ENCODE measurements at regions of chr3 and their contacts with region 1.

Region 1: GRCh38 chr3:25594007-25594502 is 70.7 kb downstream of the TOP2B start:
- DNase-seq: peak; percentile 58
- H3K4me3 ChIP-seq: no peak overlapping the region
- H3K27ac ChIP-seq: no peak overlapping the region
- H3K4me1 ChIP-seq: peaks cover 4% of the 10 kb centered on the region
- H3K27me3 ChIP-seq: no peaks in the 10 kb centered on the region
- CTCF ChIP-seq: peak; percentile 64 to 68

Region 2: DNA sequence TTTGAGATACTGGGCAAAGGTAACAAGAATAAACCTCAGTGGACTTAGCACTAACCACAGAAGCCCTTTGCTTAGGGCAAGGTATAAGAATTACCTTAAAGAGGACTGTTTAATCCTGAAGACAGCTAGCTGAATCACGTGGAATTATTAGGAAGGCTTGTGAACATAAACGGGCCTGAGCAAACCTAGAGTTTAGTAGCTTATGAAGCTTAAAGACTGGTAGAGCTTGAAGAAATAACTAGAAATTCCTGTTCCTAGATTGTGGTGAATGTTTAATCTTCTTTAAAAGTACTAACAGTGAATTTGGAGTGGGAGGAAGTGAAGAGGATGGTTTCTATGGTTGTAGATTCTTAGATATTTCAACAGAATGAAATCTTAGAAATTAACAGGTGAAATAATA is 670.5 kb before region 1 on chr3:
- CTCF ChIA-PET with region 1: interaction called, 22 read pairs
- dilution Hi-C with region 1: no loop called
- in situ Hi-C with region 1: no loop called
- intact Hi-C with region 1: no loop called
- DNase-seq: no peak
- H3K4me3 ChIP-seq: no peak overlapping the region
- H3K27ac ChIP-seq: no peak overlapping the region
- H3K4me1 ChIP-seq: no peaks in the 10 kb centered on the region
- H3K27me3 ChIP-seq: peaks cover 2% of the 10 kb centered on the region
- CTCF ChIP-seq: no peak

Region 3: DNA sequence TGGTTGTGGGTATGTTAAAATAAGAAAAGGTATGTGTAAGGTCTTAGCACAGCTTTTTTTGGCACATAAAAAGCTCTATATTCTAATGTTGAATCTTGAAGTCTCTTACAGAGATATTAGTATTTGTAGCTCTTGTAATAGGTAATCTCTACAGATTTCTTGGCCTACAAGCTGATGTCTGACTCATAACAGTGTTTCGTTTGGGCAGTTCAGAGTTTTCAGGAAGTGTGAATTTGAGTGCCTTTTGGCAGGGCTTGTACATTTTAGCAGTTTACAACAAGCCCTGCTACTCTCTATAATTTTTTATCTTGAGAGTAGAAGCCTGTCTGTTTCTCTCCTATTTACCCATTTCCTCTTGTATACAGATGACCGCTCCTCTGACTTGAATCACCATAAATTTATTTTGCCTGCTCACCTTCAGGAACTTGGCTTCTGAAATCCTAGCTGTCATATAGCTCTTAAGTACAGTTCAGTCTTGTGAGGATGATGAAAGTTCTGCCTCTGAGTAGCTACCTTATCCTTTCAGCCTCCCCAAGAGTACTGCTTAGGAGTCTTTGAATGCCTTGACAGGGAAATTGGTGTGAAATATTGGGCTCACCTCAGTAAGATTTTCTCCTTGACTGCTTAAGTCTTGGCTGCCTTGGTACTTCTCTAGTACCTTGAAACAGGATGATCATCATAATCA is 585.9 kb before region 1 on chr3:
- CTCF ChIA-PET with region 1: no interaction called
- dilution Hi-C with region 1: no loop called
- in situ Hi-C with region 1: loop called (anchors 25 kb)
- intact Hi-C with region 1: no loop called
- DNase-seq: peak; percentile 5
- H3K4me3 ChIP-seq: no peak overlapping the region
- H3K27ac ChIP-seq: no peak overlapping the region
- H3K4me1 ChIP-seq: no peaks in the 10 kb centered on the region
- H3K27me3 ChIP-seq: no peaks in the 10 kb centered on the region
- CTCF ChIP-seq: no peak

Region 4: DNA sequence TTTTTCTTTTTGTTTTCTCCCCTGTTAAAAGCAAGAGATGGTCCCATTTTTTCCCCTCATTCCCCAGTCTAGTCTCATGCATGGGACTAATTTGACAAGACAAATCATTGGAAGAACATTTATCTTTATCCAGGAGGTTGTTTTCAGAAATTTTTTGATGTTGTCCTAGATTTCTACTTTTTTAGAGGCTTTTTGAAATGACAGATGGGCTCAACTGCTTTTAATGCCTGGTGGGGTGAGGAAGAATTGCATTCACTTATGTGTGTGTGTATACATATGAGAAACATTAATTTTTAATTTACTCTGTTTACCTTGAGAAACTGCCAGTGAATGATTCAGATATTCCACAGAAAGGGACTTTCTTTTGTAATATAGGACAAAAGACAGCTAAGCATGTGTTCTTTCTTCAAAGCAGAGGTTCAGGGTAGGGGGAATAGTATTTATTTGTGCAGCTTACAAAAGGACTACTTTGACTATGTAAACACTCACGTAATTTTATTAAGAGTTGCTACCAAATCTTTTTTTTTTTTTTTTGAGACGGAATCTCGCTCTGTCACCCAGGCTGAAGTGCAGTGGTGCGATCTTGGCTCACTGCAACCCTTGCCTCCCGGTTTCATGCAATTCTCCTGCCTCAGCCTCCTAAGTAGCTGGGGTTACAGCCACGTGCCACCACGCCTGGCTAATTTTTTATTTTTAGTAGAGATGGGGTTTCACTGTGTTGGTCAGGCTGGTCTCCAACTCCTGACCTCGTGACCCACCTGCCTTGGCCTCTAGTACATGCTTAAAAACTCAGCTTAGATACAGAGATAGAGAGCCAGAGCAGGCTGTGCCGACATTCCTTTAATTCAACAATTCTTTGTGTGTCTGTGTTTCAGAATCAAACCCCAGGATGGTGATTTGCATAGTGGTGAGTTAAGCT is 296.1 kb before region 1 on chr3:
- CTCF ChIA-PET with region 1: no interaction called
- dilution Hi-C with region 1: no loop called
- in situ Hi-C with region 1: no loop called
- intact Hi-C with region 1: loop called (anchors 10 kb)
- DNase-seq: peak; percentile 15
- H3K4me3 ChIP-seq: no peak overlapping the region
- H3K27ac ChIP-seq: no peak overlapping the region
- H3K4me1 ChIP-seq: peaks cover 16% of the 10 kb centered on the region
- H3K27me3 ChIP-seq: no peaks in the 10 kb centered on the region
- CTCF ChIP-seq: peak in 1 of 2 donors; percentile 9

Region 5: DNA sequence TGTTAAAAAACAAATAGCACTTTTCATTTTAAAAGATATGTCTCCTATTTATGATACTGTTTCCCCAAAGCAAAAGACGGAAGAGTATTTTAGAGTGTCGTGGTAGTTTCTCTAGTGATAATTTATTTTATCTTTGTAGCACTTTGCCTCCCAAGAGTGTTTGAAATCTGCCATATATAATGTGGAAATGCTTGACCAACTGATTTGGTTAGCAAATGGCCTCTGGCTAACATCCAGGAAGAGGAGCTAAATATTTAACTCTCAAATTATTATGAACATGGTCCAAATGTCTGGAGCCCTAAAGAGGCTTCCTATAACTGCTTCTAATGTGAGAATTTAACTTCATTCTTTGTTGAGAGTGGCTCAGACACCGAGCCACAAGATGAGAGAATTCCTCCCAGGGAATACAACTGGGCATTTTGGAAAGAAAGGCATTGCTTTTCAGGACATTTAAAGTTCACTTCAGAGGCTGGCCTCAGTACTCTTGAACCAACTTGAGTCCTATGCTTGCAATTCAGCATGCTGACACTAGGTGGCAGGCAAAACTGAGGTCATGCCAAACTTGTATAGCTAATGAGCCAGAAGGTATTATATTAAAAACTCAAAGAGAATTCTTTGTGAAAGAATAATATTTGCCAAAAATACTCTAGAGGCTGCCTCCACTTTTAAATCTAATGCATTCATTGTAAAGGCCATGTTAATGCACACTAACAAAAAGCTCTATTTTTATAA is 61.5 kb before region 1 on chr3:
- CTCF ChIA-PET with region 1: no interaction called
- dilution Hi-C with region 1: no loop called
- in situ Hi-C with region 1: no loop called
- intact Hi-C with region 1: loop called (anchors 2 kb)
- DNase-seq: no peak
- H3K4me3 ChIP-seq: no peak overlapping the region
- H3K27ac ChIP-seq: no peak overlapping the region
- H3K4me1 ChIP-seq: no peaks in the 10 kb centered on the region
- H3K27me3 ChIP-seq: no peaks in the 10 kb centered on the region
- CTCF ChIP-seq: peak; percentile 58 to 66

Region 6: GRCh38 chr3:25664810-25665314 is 70.8 kb after region 1 on chr3 and contains the start of gene TOP2B:
- CTCF ChIA-PET with region 1: no interaction called
- dilution Hi-C with region 1: no loop called
- in situ Hi-C with region 1: no loop called
- intact Hi-C with region 1: no loop called
- DNase-seq: peak; percentile 93
- H3K4me3 ChIP-seq: peak within 1 kb of the TSS; percentile 90 to 97 (median 93)
- H3K27ac ChIP-seq: peak within 1 kb of the TSS; percentile 82
- H3K4me1 ChIP-seq: peaks cover 11% of the 10 kb centered on the region
- H3K27me3 ChIP-seq: no peaks in the 10 kb centered on the region
- CTCF ChIP-seq: no peak
- total RNA-seq, gene TOP2B: 46.3 to 72.4 TPM